ENCODE measurements at regions of chr15 and their contacts with region 1.

Region 1: GRCh38 chr15:90535254-90535653 is 5.5 kb downstream of the CRTC3 start:
- DNase-seq: no peak
- ATAC-seq: no peak
- H3K4me3 ChIP-seq: no peak overlapping the region
- H3K27ac ChIP-seq: peak overlapping the region in 9 of 12 donors; percentile 27 to 69 (median 52)
- H3K4me1 ChIP-seq: peaks cover 0 to 81% (median 43%) of the 10 kb centered on the region in 12 donors
- H3K27me3 ChIP-seq: no peaks in the 10 kb centered on the region
- CTCF ChIP-seq: no peak
- POLR2A ChIP-seq: no peak

Region 2: GRCh38 chr15:90598031-90598577 is 62.9 kb after region 1 on chr15:
- intact Hi-C with region 1: loop called in 7 of 10 experiments (anchors 2 to 10 kb)
- DNase-seq: peak in 4 of 5 donors; percentile 56 to 72 (median 64)
- ATAC-seq: peak; percentile 72 to 78 (median 76)
- H3K4me3 ChIP-seq: no peak overlapping the region
- H3K27ac ChIP-seq: peak overlapping the region; percentile 25 to 87 (median 66)
- H3K4me1 ChIP-seq: peaks cover 8 to 59% (median 35%) of the 10 kb centered on the region in 12 donors
- H3K27me3 ChIP-seq: no peaks in the 10 kb centered on the region
- CTCF ChIP-seq: peak in 7 of 12 donors; percentile 12 to 47 (median 22)
- POLR2A ChIP-seq: no peak

Region 3: DNA sequence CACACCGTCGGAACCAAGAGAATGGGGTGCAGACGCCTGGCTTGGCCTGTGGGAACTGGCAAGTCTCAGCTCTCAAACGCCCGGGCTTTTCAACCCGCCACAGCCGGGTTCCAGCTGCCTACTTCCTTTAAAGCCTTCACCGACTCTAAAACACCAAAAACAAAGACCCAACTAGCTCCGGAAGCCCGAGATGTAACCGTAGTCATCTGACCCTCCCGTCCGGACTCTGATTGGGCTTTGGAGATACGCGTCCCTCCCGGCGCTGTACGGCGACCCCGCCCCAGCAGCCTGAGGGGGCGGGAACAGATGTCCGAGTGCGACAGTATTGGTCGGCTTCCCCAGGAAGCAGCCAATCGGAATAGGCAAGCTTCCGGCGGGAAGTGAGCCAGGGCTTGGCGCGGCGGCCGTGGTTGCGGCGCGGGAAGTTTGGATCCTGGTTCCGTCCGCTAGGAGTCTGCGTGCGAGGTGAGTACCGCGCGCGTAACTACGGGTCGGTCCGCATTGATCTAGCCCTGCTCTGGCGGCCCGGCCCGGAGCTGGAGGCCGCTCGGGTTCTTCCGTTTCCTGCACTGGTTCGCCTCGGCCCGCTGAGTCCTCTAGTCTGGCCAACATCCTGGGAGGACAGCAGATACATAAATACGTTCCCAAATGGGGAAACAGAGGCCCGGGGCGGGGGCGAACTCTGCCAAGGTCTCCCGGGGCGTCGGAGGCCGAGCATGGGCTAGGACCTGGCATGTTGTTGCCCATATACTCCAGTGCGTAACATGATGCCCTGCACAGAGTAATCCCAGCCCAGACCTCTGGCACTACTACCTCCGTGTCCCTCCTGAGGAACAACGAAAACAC is 181.9 kb after region 1 on chr15 and contains the start of gene BLM:
- intact Hi-C with region 1: no loop called
- DNase-seq: peak; percentile 95 to 98 (median 96)
- ATAC-seq: peak; percentile 100
- H3K4me3 ChIP-seq: peak within 1 kb of the TSS; percentile 9 to 83 (median 66)
- H3K27ac ChIP-seq: peak within 1 kb of the TSS; percentile 68 to 97 (median 88)
- H3K4me1 ChIP-seq: peaks cover 0 to 25% (median 10%) of the 10 kb centered on the region in 12 donors
- H3K27me3 ChIP-seq: no peaks in the 10 kb centered on the region
- CTCF ChIP-seq: peak in 11 of 12 donors; percentile 18 to 54 (median 39)
- POLR2A ChIP-seq: peak in 1 of 2 donors; percentile 78
- total RNA-seq, gene BLM: 4.3 to 39.6 (median 12.2) TPM

Measured in heart left ventricle (tissue), 16 donors.